ENCODE measurements at regions of chr10 and their contacts with region 1.

Region 1: DNA sequence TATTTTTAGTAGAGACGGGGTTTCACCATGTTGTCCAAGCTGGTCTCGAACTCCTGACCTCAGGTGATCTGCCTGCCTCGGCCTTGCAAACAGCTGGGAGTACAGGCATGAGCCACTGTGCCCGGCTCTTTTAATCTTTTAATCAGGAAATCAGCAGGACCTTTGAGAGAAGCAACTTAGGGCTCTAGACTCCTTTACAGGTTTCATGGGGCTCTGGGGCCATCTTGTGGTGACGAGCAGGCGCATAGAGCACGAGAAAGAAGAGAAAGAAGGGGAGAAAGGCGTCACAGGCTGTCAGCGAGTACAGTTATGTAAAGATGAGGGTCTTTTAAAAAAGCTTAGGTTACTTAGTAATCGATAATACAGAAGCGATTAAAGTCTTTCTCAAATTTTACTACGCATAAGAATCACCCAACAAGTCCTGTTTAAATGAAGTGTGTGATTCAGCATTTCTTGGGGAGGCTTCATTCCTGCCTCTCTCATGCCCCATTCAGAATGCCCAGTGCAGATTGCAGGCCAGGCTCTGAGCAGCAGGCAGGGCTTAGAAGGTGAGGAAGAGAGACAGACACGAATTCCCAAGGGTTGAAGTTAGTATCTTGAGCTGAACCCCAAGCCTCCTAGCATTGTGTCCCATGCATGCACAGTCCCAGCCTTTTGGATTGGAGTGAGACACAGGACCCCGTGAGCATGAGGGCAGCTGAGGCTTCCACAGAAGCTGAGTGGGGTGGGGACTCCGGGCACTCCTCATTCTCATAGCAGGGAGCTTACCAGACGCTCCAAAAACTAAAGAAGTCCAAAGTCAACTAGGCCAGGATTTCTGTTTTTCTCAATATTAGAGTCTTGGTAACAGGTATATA is 23.6 kb upstream of the PFKP start:
- DNase-seq: peak; percentile 79
- H3K4me3 Mint-ChIP-seq: no peak overlapping the region
- H3K27ac Mint-ChIP-seq: no peak overlapping the region
- H3K4me1 Mint-ChIP-seq: peaks cover 31% of the 10 kb centered on the region
- H3K27me3 Mint-ChIP-seq: peaks cover 26% of the 10 kb centered on the region
- CTCF ChIP-seq: peak; percentile 83

Region 2: DNA sequence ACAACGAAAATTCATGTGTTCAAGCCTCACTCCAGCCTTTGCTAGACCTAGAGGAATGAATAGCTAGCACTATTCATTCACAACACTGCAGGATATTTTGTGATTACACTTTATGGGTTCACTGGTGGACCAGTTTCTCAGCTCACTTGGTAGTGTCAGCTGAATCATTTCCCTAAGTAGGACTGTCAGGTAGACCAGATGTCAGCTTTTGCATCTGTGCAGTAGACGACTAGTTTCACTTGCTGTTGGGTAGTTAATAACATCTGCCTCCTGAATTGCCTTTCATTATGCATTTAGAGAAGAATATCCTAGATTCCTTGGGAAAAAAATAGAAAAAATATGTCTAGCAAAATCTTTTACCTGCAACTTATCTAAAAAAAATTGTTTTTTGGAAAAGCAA is 1602.8 kb before region 1 on chr10:
- CTCF ChIA-PET with region 1: no interaction called
- POLR2A ChIA-PET with region 1: no interaction called
- intact Hi-C with region 1: loop called (anchors 5 kb)
- DNase-seq: no peak
- H3K4me3 Mint-ChIP-seq: no peak overlapping the region
- H3K27ac Mint-ChIP-seq: no peak overlapping the region
- H3K4me1 Mint-ChIP-seq: no peaks in the 10 kb centered on the region
- H3K27me3 Mint-ChIP-seq: no peaks in the 10 kb centered on the region
- CTCF ChIP-seq: no peak

Region 3: DNA sequence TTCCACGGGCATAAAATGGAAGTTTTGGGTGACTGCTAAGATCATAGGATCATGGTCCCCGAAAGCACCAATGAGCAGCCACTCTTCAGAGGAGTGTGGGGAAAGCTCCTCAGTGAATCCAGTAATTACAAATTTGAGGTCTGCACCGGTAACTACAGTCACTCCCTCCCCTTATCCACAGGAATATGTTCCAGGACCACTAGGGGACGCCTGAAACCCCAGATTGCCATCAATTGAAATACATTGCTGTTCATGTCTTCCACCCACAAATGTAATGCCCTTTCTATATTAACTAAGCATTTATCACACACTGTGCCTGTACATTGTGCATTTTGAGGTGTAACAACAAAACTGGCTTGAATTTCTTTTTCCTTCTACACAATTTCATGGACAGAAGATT is 424.3 kb before region 1 on chr10:
- CTCF ChIA-PET with region 1: no interaction called
- POLR2A ChIA-PET with region 1: no interaction called
- intact Hi-C with region 1: loop called (anchors 10 kb)
- DNase-seq: peak; percentile 47
- H3K4me3 Mint-ChIP-seq: no peak overlapping the region
- H3K27ac Mint-ChIP-seq: no peak overlapping the region
- H3K4me1 Mint-ChIP-seq: peaks cover 11% of the 10 kb centered on the region
- H3K27me3 Mint-ChIP-seq: peaks cover 54% of the 10 kb centered on the region
- CTCF ChIP-seq: peak; percentile 37

Region 4: DNA sequence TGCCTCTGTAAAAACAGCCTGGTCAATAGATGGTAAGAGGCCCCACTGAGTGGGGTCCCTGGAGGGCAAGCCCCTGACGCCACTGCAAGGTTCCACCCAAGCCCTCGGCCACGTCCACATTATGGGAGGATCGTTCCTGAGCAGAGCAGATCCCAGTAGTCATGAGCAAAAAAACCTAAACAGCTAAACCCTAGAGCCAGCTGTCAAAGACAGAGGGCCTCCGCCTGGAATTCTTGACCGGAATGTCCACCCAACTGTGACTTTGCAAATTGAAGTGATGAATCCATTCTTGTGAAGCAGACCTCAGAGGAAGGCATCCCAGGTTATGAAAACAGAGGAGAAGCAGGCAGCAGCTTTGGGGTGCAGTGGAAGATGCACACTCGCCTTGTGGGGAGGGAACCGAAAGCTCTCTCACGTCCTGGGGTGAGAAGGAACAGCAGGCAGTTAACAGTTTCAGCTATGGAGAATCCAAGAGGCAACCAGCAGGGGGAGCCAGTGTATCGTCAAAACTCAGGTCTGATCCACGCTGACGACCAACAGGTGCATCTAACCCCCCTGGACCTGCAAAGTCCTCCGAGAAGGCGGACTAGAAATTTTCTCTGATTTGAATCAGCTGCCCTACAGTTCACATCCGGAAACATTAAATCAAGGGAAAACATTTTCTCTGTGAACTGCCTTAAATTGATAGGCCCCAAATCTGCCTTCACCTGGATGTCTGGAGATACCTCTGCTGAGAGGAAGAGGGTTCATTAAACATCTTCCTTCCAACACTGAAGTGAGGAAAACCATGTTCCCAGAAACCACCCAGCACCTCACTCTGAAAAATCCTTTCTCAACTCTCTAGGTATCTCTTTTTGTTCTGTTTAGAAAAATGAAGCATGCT is 115.5 kb before region 1 on chr10:
- CTCF ChIA-PET with region 1: interaction called, 36 read pairs
- POLR2A ChIA-PET with region 1: no interaction called
- intact Hi-C with region 1: loop called (anchors 1 kb)
- DNase-seq: peak; percentile 76
- H3K4me3 Mint-ChIP-seq: no peak overlapping the region
- H3K27ac Mint-ChIP-seq: no peak overlapping the region
- H3K4me1 Mint-ChIP-seq: peaks cover 12% of the 10 kb centered on the region
- H3K27me3 Mint-ChIP-seq: peaks cover 54% of the 10 kb centered on the region
- CTCF ChIP-seq: peak; percentile 90

Region 5: GRCh38 chr10:2938869-2939268 is 104.9 kb before region 1 on chr10:
- CTCF ChIA-PET with region 1: no interaction called
- POLR2A ChIA-PET with region 1: no interaction called
- intact Hi-C with region 1: loop called (anchors 1 kb)
- DNase-seq: no peak
- H3K4me3 Mint-ChIP-seq: no peak overlapping the region
- H3K27ac Mint-ChIP-seq: no peak overlapping the region
- H3K4me1 Mint-ChIP-seq: no peaks in the 10 kb centered on the region
- H3K27me3 Mint-ChIP-seq: peaks cover 97% of the 10 kb centered on the region
- CTCF ChIP-seq: no peak

Region 6: GRCh38 chr10:2978111-2978510 is 65.6 kb before region 1 on chr10:
- CTCF ChIA-PET with region 1: interaction called, 9 read pairs
- POLR2A ChIA-PET with region 1: interaction called, 3 read pairs
- intact Hi-C with region 1: loop called (anchors 1 kb)
- DNase-seq: peak; percentile 50
- H3K4me3 Mint-ChIP-seq: no peak overlapping the region
- H3K27ac Mint-ChIP-seq: no peak overlapping the region
- H3K4me1 Mint-ChIP-seq: peaks cover 5% of the 10 kb centered on the region
- H3K27me3 Mint-ChIP-seq: no peaks in the 10 kb centered on the region
- CTCF ChIP-seq: peak; percentile 60

Region 7: GRCh38 chr10:3054183-3054850 is 10.6 kb after region 1 on chr10:
- CTCF ChIA-PET with region 1: interaction called, 26 read pairs
- POLR2A ChIA-PET with region 1: interaction called, 5 read pairs
- intact Hi-C with region 1: no loop called
- DNase-seq: no peak
- H3K4me3 Mint-ChIP-seq: no peak overlapping the region
- H3K27ac Mint-ChIP-seq: no peak overlapping the region
- H3K4me1 Mint-ChIP-seq: peaks cover 6% of the 10 kb centered on the region
- H3K27me3 Mint-ChIP-seq: peaks cover 14% of the 10 kb centered on the region
- CTCF ChIP-seq: no peak